Cardiac septum (tissue), 1 donor: ENCODE measurements at regions of chr1 and their contacts with region 1.

Region 1: DNA sequence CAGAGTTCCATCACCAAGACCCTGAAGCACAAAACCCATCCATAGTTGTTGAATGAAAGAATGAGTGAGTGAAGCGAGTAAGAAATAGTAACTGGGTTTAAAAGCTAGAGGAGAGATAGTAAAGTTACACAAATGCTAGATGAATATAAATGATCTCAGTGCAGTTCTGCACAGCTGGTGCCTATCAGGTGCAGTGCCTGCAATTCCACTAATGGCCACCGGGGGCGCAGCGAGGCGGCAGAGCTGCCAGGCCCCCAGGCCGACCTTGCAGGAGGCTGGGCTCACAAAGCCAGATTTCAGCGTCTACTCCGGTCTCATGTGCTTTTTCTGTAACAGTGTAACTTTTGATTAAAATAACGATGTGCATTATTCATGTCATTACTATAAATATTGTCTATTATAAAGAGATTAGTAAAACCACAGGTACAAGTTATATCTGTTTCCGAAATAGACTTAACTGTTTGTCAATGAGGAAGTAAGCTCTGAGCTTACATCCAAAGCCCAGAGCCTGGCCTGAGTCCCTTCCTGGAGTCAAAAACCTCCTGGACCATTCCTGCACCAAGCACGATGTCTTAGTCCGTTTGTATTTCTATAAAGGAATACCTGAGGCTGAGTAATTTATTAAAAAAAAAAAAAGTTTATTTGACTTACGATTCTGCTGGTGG is 477.6 kb downstream of the NPHP4 start:
- DNase-seq: peak; percentile 87

Region 2: DNA sequence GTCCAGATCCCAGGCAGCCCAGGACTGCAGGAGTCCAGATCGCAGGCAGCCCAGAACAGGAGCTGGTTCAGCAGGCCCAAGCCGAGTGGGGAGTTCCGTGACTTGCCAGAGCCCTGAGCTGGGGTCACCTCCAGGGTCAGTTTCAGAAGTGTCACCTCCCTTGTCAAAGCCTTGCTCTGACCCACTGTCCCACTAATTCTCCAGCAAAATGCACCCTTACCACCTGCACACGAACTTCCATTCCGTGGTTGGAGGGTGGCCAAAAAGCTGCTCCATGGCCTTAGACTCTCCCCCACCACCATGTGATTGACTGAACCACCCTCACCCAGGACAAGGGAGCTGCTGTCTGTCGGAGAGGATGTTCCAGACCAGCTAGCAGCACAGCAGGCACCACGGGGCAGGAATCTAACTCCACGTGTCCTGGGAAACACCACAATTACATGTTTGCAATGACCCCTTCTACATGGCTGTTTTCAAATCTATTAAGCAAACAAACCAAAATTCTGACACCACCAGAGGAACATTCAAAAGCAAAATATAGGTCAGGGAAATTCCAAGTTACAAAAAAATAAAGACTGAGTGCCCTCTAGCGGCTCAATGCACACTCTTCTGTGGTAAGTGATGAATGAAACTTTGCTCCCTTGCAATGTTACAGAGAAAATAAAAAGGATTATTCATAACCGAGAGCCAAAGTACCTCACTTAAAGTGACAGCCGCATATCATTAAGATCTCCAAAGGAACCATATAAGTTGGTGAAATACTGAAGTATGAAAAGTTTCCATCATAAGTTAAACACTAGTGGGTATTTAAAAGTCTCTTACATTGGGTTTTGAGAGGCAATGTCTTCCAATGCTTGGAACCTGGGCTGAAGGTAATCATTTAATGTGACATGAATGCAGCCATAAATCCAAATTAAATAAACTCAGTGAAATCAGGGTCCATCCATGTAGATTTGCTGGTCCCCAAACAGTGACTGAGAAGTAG is 401.2 kb after region 1 on chr1:
- intact Hi-C with region 1: loop called (anchors 5 kb)
- DNase-seq: peak; percentile 41

Region 3: GRCh38 chr1:5975133-5975880 is 460.7 kb after region 1 on chr1:
- intact Hi-C with region 1: loop called (anchors 5 kb)
- DNase-seq: peak; percentile 86